CD8-positive, alpha-beta T cell (primary cell): ENCODE measurements at regions of chr5 and their contacts with region 1.

Region 1: DNA sequence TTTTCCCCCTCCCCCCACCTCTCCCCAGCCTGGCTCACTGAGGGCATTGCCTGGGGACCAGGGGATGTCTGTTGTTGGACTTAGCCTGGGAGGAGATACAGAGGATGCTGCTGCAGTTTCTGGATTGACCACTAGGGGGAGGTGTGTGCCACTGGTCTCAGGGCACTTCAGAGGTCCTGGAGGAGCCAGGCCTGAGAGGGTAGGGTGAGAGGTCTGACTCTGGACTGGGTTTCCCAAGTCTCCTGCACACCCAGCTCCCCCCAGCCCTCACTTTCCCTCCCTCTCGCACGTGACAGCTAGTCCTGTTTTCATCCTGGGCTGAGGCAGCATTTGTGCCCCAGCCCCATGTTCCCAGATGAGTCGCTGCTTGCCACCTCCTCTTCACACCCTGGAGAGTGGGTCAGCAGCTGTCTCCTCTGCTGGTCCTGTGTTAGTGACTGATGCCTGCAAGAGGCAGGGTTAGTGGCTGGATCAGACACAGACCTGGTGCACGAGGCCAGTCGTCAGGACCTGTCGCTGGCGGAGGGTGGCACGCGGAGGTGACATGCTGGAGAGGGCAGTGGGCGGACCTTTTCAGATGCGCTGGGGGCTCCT is 4.4 kb downstream of the IL3 start:
- DNase-seq: peak; percentile 56 to 85 (median 80)
- ATAC-seq: peak; percentile 77
- H3K4me3 ChIP-seq: no peak overlapping the region
- H3K4me3 Mint-ChIP-seq: no peak overlapping the region
- H3K27ac ChIP-seq: no peak overlapping the region
- H3K27ac Mint-ChIP-seq: no peak overlapping the region
- H3K4me1 ChIP-seq: no peaks in the 10 kb centered on the region
- H3K4me1 Mint-ChIP-seq: peaks cover 2% of the 10 kb centered on the region
- H3K27me3 ChIP-seq: no peaks in the 10 kb centered on the region
- H3K27me3 Mint-ChIP-seq: no peaks in the 10 kb centered on the region
- CTCF ChIP-seq: peak; percentile 97

Region 2: GRCh38 chr5:132007399-132008165 is 57.3 kb before region 1 on chr5:
- CTCF ChIA-PET with region 1: interaction called, 19 read pairs
- POLR2A ChIA-PET with region 1: no interaction called
- intact Hi-C with region 1: loop called (anchors 2 to 5 kb)
- DNase-seq: peak; percentile 51 to 84 (median 79)
- ATAC-seq: peak; percentile 47
- H3K4me3 ChIP-seq: no peak overlapping the region
- H3K4me3 Mint-ChIP-seq: no peak overlapping the region
- H3K27ac ChIP-seq: no peak overlapping the region
- H3K27ac Mint-ChIP-seq: no peak overlapping the region
- H3K4me1 ChIP-seq: peaks cover 11% of the 10 kb centered on the region
- H3K4me1 Mint-ChIP-seq: peaks cover 23% of the 10 kb centered on the region
- H3K27me3 ChIP-seq: peaks cover 0 to 9% of the 10 kb centered on the region in 2 experiments
- H3K27me3 Mint-ChIP-seq: peaks cover 13% of the 10 kb centered on the region
- CTCF ChIP-seq: peak; percentile 67

Region 3: GRCh38 chr5:132134384-132134783 is 69.5 kb after region 1 on chr5:
- CTCF ChIA-PET with region 1: interaction called, 14 read pairs
- POLR2A ChIA-PET with region 1: no interaction called
- intact Hi-C with region 1: loop called (anchors 1 kb)
- DNase-seq: peak in 2 of 9 experiments; percentile 37 to 56
- ATAC-seq: no peak
- H3K4me3 ChIP-seq: no peak overlapping the region
- H3K4me3 Mint-ChIP-seq: no peak overlapping the region
- H3K27ac ChIP-seq: no peak overlapping the region
- H3K27ac Mint-ChIP-seq: no peak overlapping the region
- H3K4me1 ChIP-seq: no peaks in the 10 kb centered on the region
- H3K4me1 Mint-ChIP-seq: no peaks in the 10 kb centered on the region
- H3K27me3 ChIP-seq: no peaks in the 10 kb centered on the region
- H3K27me3 Mint-ChIP-seq: peaks cover 7% of the 10 kb centered on the region
- CTCF ChIP-seq: no peak

Region 4: GRCh38 chr5:132238169-132238744 is 173.4 kb after region 1 on chr5:
- CTCF ChIA-PET with region 1: interaction called, 7 read pairs
- POLR2A ChIA-PET with region 1: no interaction called
- intact Hi-C with region 1: loop called in 1 of 2 experiments (anchors 5 kb)
- DNase-seq: peak; percentile 45 to 78 (median 70)
- ATAC-seq: peak; percentile 89
- H3K4me3 ChIP-seq: no peak overlapping the region
- H3K4me3 Mint-ChIP-seq: no peak overlapping the region
- H3K27ac ChIP-seq: no peak overlapping the region
- H3K27ac Mint-ChIP-seq: no peak overlapping the region
- H3K4me1 ChIP-seq: no peaks in the 10 kb centered on the region
- H3K4me1 Mint-ChIP-seq: no peaks in the 10 kb centered on the region
- H3K27me3 ChIP-seq: no peaks in the 10 kb centered on the region
- H3K27me3 Mint-ChIP-seq: no peaks in the 10 kb centered on the region
- CTCF ChIP-seq: peak; percentile 73